ENCODE measurements at regions of chr7 and their contacts with region 1.

Region 1: DNA sequence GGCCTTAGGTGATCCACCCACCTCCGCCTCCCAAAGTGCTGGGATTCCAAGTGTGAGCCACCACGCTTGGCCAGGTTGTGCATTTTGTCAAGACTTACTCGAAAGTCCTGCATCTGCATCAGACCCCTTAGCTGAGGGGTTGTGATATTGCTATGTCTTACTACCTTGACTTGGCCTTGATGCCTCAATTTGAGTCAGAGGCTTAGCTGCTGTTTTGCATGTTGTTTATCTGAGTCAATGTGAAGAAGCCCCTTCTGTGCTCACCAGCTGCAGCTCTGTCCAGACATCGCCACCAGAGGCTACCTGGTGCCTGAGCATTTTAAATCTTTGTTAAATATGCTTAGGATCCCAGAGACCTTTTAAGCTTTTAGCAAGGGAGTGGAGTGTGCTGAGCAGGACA is 18.1 kb downstream of the UBE2D4 start:
- DNase-seq: no peak
- ATAC-seq: no peak
- H3K4me3 ChIP-seq: no peak overlapping the region
- H3K4me3 Mint-ChIP-seq: no peak overlapping the region
- H3K27ac ChIP-seq: no peak overlapping the region
- H3K27ac Mint-ChIP-seq: no peak overlapping the region
- H3K4me1 ChIP-seq: no peaks in the 10 kb centered on the region
- H3K4me1 Mint-ChIP-seq: no peaks in the 10 kb centered on the region
- H3K27me3 ChIP-seq: no peaks in the 10 kb centered on the region
- H3K27me3 Mint-ChIP-seq: no peaks in the 10 kb centered on the region

Region 2: GRCh38 chr7:44152971-44153911 is 209.0 kb after region 1 on chr7:
- CTCF ChIA-PET with region 1: interaction called in 1 of 2 experiments, 10 read pairs
- POLR2A ChIA-PET with region 1: no interaction called
- DNase-seq: no peak
- ATAC-seq: no peak
- H3K4me3 ChIP-seq: no peak overlapping the region
- H3K4me3 Mint-ChIP-seq: no peak overlapping the region
- H3K27ac ChIP-seq: no peak overlapping the region
- H3K27ac Mint-ChIP-seq: no peak overlapping the region
- H3K4me1 ChIP-seq: no peaks in the 10 kb centered on the region
- H3K4me1 Mint-ChIP-seq: no peaks in the 10 kb centered on the region
- H3K27me3 ChIP-seq: peaks cover 0 to 20% of the 10 kb centered on the region in 2 experiments
- H3K27me3 Mint-ChIP-seq: no peaks in the 10 kb centered on the region